ENCODE measurements at regions of chrX and their contacts with region 1.

Region 1: GRCh38 chrX:18377796-18378195 is 23.3 kb upstream of the SCML2 start:
- DNase-seq: peak; percentile 43
- H3K4me3 Mint-ChIP-seq: no peak overlapping the region
- H3K27ac Mint-ChIP-seq: no peak overlapping the region
- H3K4me1 Mint-ChIP-seq: peaks cover 4% of the 10 kb centered on the region
- H3K27me3 Mint-ChIP-seq: no peaks in the 10 kb centered on the region

Region 2: DNA sequence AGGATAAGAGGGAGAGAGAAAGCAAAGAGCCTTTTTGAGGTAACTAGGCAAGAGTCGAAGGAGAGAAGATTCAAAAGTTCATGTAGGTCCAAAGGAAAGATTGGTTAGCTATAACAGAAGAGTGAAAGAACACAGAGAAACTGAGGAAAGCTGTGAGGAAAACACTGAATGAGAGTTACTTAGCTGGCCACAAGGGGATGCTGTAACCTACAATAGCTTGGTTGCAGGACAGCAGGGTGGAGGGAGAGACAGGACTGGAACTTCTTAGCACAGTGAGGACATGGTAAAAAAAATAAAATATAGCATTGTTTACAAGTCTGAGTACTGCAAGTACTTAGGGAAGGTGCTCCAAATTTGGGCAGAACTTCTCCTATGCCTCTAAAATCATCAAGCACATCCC is 565.0 kb before region 1 on chrX:
- CTCF ChIA-PET with region 1: interaction called, 11 read pairs
- DNase-seq: no peak
- H3K4me3 Mint-ChIP-seq: no peak overlapping the region
- H3K27ac Mint-ChIP-seq: no peak overlapping the region
- H3K4me1 Mint-ChIP-seq: no peaks in the 10 kb centered on the region
- H3K27me3 Mint-ChIP-seq: no peaks in the 10 kb centered on the region

Region 3: GRCh38 chrX:17944833-17945497 is 432.8 kb before region 1 on chrX:
- CTCF ChIA-PET with region 1: interaction called, 11 read pairs
- DNase-seq: peak; percentile 21
- H3K4me3 Mint-ChIP-seq: no peak overlapping the region
- H3K27ac Mint-ChIP-seq: no peak overlapping the region
- H3K4me1 Mint-ChIP-seq: no peaks in the 10 kb centered on the region
- H3K27me3 Mint-ChIP-seq: peaks cover 3% of the 10 kb centered on the region

Region 4: DNA sequence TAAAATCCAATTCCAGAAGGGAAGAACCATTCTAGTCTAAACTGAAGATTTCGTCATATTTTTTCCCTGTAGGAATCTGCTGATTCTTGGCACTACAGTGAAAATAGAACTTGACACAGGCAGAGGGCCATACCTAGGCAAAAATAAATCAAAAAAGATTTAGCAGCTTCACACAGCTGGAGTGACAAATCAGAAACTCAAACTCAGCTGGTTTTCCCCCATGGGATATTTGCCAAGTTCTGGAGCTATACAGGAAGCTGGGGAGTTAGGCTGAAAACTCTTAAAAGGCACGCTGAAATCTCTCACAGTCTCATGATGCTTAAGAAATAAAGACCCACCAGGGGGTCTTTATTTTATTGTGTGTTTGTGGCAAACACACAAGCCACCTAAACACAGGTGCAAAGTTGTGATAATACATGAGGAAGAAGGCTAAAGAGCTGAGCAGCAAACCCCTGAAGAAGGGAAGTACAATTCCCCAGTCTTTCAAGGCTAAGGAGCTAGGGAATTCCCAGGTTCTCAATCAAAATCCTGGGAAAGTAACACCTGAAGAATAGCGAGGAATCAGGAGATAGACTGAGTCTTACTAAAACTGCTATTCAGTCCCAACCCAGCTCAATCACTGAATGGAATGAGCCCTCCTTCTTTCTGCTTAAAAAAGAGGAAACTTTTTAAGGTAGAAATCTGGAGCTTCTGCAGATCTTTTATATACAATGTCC is 125.0 kb before region 1 on chrX:
- CTCF ChIA-PET with region 1: no interaction called
- DNase-seq: no peak
- H3K4me3 Mint-ChIP-seq: no peak overlapping the region
- H3K27ac Mint-ChIP-seq: no peak overlapping the region
- H3K4me1 Mint-ChIP-seq: no peaks in the 10 kb centered on the region
- H3K27me3 Mint-ChIP-seq: no peaks in the 10 kb centered on the region